ENCODE measurements at regions of chr19 and their contacts with region 1.

Region 1: GRCh38 chr19:2962045-2962561 is 15.3 kb upstream of the TLE6 start:
- DNase-seq: no peak

Region 2: GRCh38 chr19:2887391-2887914 is 74.7 kb before region 1 on chr19:
- intact Hi-C with region 1: no loop called
- DNase-seq: no peak

Region 3: GRCh38 chr19:3108775-3109174 is 146.7 kb after region 1 on chr19:
- intact Hi-C with region 1: loop called (anchors 10 kb)
- DNase-seq: no peak

Region 4: GRCh38 chr19:3154957-3155736 is 193.0 kb after region 1 on chr19:
- intact Hi-C with region 1: loop called in 1 of 2 experiments (anchors 1 kb)
- DNase-seq: peak; percentile 95

Region 5: GRCh38 chr19:3163230-3163886 is 201.3 kb after region 1 on chr19:
- intact Hi-C with region 1: loop called in 1 of 2 experiments (anchors 1 kb)
- DNase-seq: peak; percentile 90

Measured in posterior vena cava (tissue), 2 donors.